ENCODE measurements at regions of chr12 and their contacts with region 1.

Region 1: GRCh38 chr12:94133964-94134795 is 14.2 kb upstream of the PLXNC1 start:
- DNase-seq: no peak
- ATAC-seq: peak; percentile 97
- H3K4me3 Mint-ChIP-seq: no peak overlapping the region
- H3K27ac Mint-ChIP-seq: no peak overlapping the region
- H3K4me1 Mint-ChIP-seq: peaks cover 9% of the 10 kb centered on the region
- H3K27me3 Mint-ChIP-seq: no peaks in the 10 kb centered on the region
- CTCF ChIP-seq: peak; percentile 19

Region 2: DNA sequence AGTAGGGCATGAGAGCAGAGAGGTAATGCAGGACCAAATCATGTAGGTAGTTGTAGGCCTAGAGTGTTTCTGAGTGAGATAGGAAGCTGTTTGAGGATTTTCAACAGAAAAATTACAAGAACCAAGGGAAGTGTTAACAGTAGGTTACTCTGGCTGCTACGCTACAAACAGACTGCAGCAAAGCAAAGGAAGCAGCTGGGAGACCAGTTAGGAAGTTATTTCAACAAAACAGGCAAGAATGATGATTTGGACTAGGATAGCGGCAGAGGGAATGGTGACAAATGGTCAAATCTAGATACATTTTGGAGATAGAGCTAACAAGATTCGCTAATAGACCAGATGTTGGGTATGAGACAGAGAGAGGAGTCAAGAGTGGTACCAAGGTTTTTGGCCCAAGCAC is 640.1 kb before region 1 on chr12:
- CTCF ChIA-PET with region 1: no interaction called
- POLR2A ChIA-PET with region 1: no interaction called
- intact Hi-C with region 1: no loop called
- DNase-seq: no peak
- ATAC-seq: no peak
- H3K4me3 Mint-ChIP-seq: no peak overlapping the region
- H3K27ac Mint-ChIP-seq: no peak overlapping the region
- H3K4me1 Mint-ChIP-seq: no peaks in the 10 kb centered on the region
- H3K27me3 Mint-ChIP-seq: no peaks in the 10 kb centered on the region
- CTCF ChIP-seq: no peak

Region 3: DNA sequence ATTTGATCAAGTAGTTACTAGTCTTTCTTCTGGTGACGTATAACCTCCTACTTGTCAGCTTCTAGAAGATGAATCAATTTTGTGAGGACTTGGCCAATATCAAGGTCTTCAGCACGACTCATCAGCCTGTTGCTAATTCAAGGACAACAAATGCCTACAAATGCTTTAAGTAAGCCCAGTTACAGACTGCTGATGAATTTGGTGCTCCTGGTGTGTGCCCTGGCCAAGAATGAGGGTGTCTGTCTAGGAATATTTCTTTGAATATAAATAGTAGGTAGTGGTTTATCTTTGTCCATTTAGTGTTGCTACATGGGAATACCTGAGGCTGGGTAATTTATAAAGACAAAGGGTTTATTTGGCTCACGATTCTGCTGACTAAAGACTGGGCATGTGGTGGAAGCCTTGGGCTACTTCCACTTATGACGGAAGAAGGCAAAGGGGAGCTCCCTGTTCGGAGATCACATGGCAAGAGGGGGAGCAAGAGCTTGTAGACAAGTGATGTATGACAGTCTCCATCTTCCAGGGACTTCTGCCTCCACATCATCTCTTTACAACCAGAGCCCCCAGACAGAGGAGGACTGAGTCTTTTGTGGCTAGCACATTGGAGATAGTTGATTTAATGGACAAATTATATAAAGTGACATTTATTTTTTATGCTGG is 276.8 kb before region 1 on chr12:
- CTCF ChIA-PET with region 1: no interaction called
- POLR2A ChIA-PET with region 1: no interaction called
- intact Hi-C with region 1: no loop called
- DNase-seq: no peak
- ATAC-seq: no peak
- H3K4me3 Mint-ChIP-seq: no peak overlapping the region
- H3K27ac Mint-ChIP-seq: no peak overlapping the region
- H3K4me1 Mint-ChIP-seq: no peaks in the 10 kb centered on the region
- H3K27me3 Mint-ChIP-seq: no peaks in the 10 kb centered on the region
- CTCF ChIP-seq: no peak

Region 4: GRCh38 chr12:94195443-94195842 is 61.3 kb after region 1 on chr12:
- CTCF ChIA-PET with region 1: no interaction called
- POLR2A ChIA-PET with region 1: no interaction called
- intact Hi-C with region 1: no loop called
- DNase-seq: no peak
- ATAC-seq: no peak
- H3K4me3 Mint-ChIP-seq: no peak overlapping the region
- H3K27ac Mint-ChIP-seq: peak overlapping the region; percentile 31
- H3K4me1 Mint-ChIP-seq: peaks cover 27% of the 10 kb centered on the region
- H3K27me3 Mint-ChIP-seq: no peaks in the 10 kb centered on the region
- CTCF ChIP-seq: no peak

Region 5: GRCh38 chr12:94435511-94435927 is 301.3 kb after region 1 on chr12:
- CTCF ChIA-PET with region 1: interaction called, 35 read pairs
- POLR2A ChIA-PET with region 1: no interaction called
- intact Hi-C with region 1: loop called (anchors 1 kb)
- DNase-seq: no peak
- ATAC-seq: no peak
- H3K4me3 Mint-ChIP-seq: no peak overlapping the region
- H3K27ac Mint-ChIP-seq: no peak overlapping the region
- H3K4me1 Mint-ChIP-seq: peaks cover 12% of the 10 kb centered on the region
- H3K27me3 Mint-ChIP-seq: no peaks in the 10 kb centered on the region
- CTCF ChIP-seq: no peak

Measured in activated B cell treated with CpG ODN at 0.5 μM for 24 hours (primary cell).